ENCODE measurements at regions of chr3 and their contacts with region 1.

Region 1: GRCh38 chr3:123723522-123724168 is 138.8 kb upstream of the HACD2 start:
- DNase-seq: peak; percentile 91
- H3K4me3 ChIP-seq: no peak overlapping the region
- H3K27ac ChIP-seq: no peak overlapping the region
- H3K4me1 ChIP-seq: no peaks in the 10 kb centered on the region
- H3K27me3 ChIP-seq: no peaks in the 10 kb centered on the region
- CTCF ChIP-seq: peak; percentile 85

Region 2: DNA sequence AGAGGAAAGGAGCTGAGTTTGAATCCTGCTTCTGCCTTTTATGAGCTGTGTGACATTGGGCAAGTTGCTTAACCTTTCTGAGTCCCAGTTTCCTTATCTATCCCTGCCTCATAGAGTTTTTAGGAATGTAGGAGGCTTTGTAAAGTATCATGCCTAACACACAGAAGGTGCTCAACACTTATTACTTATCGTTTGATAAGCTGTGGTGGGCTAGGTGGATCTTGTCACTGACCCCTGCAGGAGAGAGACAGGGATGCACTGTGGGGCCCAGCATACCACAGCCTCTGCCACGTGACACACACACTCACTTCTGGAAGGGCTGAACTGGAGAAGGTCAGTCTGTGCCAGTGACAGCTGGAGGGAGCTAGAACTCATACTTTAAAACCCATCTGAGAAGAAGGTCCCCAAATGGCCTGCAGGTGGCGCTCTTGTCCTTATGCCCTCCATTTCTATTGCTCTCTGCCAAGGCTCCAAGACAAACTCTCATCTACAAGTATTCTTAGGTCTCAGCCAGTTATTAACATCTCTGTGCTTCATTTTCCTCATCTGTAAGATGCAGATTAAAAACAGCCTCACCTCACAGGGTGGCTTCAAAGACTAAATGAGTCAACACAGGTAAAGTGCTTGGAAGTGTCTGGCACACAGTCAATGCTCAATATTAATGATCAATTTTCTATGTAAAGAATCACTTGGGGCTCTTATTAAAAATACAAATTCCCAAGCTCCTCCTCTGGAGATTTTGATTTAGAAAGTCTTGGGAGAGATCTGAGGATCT is 81.3 kb before region 1 on chr3:
- CTCF ChIA-PET with region 1: interaction called, 12 read pairs
- POLR2A ChIA-PET with region 1: no interaction called
- intact Hi-C with region 1: loop called (anchors 1 kb)
- DNase-seq: peak; percentile 92
- H3K4me3 ChIP-seq: no peak overlapping the region
- H3K27ac ChIP-seq: no peak overlapping the region
- H3K4me1 ChIP-seq: no peaks in the 10 kb centered on the region
- H3K27me3 ChIP-seq: no peaks in the 10 kb centered on the region
- CTCF ChIP-seq: peak; percentile 97

Measured in A673 (cell line).